WTC11 (cell line): ENCODE measurements at regions of chr2 and their contacts with region 1.

Region 1: GRCh38 chr2:212892193-212892592 is 259.2 kb downstream of the IKZF2 start:
- DNase-seq: peak; percentile 14
- ATAC-seq: peak; percentile 89
- H3K4me3 Mint-ChIP-seq: no peak overlapping the region
- H3K27ac Mint-ChIP-seq: no peak overlapping the region
- H3K4me1 Mint-ChIP-seq: no peaks in the 10 kb centered on the region
- H3K27me3 Mint-ChIP-seq: no peaks in the 10 kb centered on the region
- CTCF ChIP-seq: peak; percentile 13; the same call in 1 of the 2 replicates

Region 2: GRCh38 chr2:212777020-212777491 is 115.1 kb before region 1 on chr2:
- CTCF ChIA-PET with region 1: interaction called, 11 read pairs
- POLR2A ChIA-PET with region 1: no interaction called
- DNase-seq: no peak
- ATAC-seq: peak; percentile 64
- H3K4me3 Mint-ChIP-seq: no peak overlapping the region
- H3K27ac Mint-ChIP-seq: no peak overlapping the region
- H3K4me1 Mint-ChIP-seq: 0 out of 2 replicates have a peak, but pooled peaks cover 4% of the 10 kb centered on the region
- H3K27me3 Mint-ChIP-seq: no peaks in the 10 kb centered on the region
- CTCF ChIP-seq: peak; percentile 40; the same call in 1 of the 2 replicates

Region 3: GRCh38 chr2:213015387-213016165 is 123.4 kb after region 1 on chr2:
- CTCF ChIA-PET with region 1: no interaction called
- POLR2A ChIA-PET with region 1: no interaction called
- DNase-seq: no peak
- ATAC-seq: no peak
- H3K4me3 Mint-ChIP-seq: no peak overlapping the region
- H3K27ac Mint-ChIP-seq: no peak overlapping the region
- H3K4me1 Mint-ChIP-seq: no peaks in the 10 kb centered on the region
- H3K27me3 Mint-ChIP-seq: no peaks in the 10 kb centered on the region
- CTCF ChIP-seq: no peak

Region 4: DNA sequence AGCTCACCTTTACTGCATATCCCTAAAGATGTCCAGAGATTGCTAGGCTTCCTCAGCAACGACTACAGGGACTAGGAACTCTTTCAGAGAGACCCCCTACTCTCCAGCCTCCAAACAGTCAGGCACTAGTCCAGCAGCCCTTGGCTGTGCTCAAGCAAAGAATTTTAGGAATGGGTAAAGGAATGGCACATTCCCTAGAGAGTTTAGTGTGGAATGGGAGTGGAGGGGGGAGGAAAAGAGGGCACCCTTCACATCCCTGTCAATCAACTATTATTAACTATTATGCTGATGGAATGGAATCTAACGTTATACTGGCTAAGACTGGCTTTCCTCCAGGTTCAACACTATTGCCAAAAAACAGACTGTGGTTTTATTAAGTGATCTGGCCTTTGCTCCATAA is 194.4 kb after region 1 on chr2:
- CTCF ChIA-PET with region 1: no interaction called
- POLR2A ChIA-PET with region 1: interaction called, 10 read pairs
- DNase-seq: peak; percentile 30
- ATAC-seq: peak; percentile 97
- H3K4me3 Mint-ChIP-seq: no peak overlapping the region
- H3K27ac Mint-ChIP-seq: peak overlapping the region; percentile 97
- H3K4me1 Mint-ChIP-seq: peaks cover 19% of the 10 kb centered on the region
- H3K27me3 Mint-ChIP-seq: no peaks in the 10 kb centered on the region
- CTCF ChIP-seq: no peak